A673 (cell line): ENCODE measurements at regions of chr17 and their contacts with region 1.

Region 1: GRCh38 chr17:4097165-4097960 is 45.5 kb downstream of the ZZEF1 start:
- DNase-seq: no peak
- H3K4me3 ChIP-seq: no peak overlapping the region
- H3K27ac ChIP-seq: no peak overlapping the region
- H3K4me1 ChIP-seq: no peaks in the 10 kb centered on the region
- H3K27me3 ChIP-seq: no peaks in the 10 kb centered on the region
- CTCF ChIP-seq: no peak

Region 2: GRCh38 chr17:3531266-3532101 is 565.9 kb before region 1 on chr17:
- CTCF ChIA-PET with region 1: interaction called, 10 read pairs
- POLR2A ChIA-PET with region 1: no interaction called
- intact Hi-C with region 1: no loop called
- DNase-seq: no peak
- H3K4me3 ChIP-seq: no peak overlapping the region
- H3K27ac ChIP-seq: no peak overlapping the region
- H3K4me1 ChIP-seq: no peaks in the 10 kb centered on the region
- H3K27me3 ChIP-seq: no peaks in the 10 kb centered on the region
- CTCF ChIP-seq: no peak

Region 3: GRCh38 chr17:4272213-4272971 is 175.0 kb after region 1 on chr17:
- CTCF ChIA-PET with region 1: no interaction called
- POLR2A ChIA-PET with region 1: interaction called, 17 read pairs
- intact Hi-C with region 1: no loop called
- DNase-seq: no peak
- H3K4me3 ChIP-seq: no peak overlapping the region
- H3K27ac ChIP-seq: no peak overlapping the region
- H3K4me1 ChIP-seq: peaks cover 6% of the 10 kb centered on the region
- H3K27me3 ChIP-seq: no peaks in the 10 kb centered on the region
- CTCF ChIP-seq: no peak